Breast epithelium (tissue), 4 donors: ENCODE measurements at regions of chr3 and their contacts with region 1.

Region 1: GRCh38 chr3:98593046-98593936 is at the start of gene CPOX:
- DNase-seq: peak; percentile 58 to 67
- H3K4me3 ChIP-seq: peak within 1 kb of the TSS; percentile 59 to 84 (median 80)
- H3K27ac ChIP-seq: peak within 1 kb of the TSS; percentile 76 to 80
- H3K4me1 ChIP-seq: peaks cover 0 to 3% of the 10 kb centered on the region in 2 donors
- H3K27me3 ChIP-seq: no peaks in the 10 kb centered on the region
- CTCF ChIP-seq: no peak
- POLR2A ChIP-seq: no peak
- total RNA-seq, gene CPOX: 14.4 to 22.1 (median 15.1) TPM

Region 2: DNA sequence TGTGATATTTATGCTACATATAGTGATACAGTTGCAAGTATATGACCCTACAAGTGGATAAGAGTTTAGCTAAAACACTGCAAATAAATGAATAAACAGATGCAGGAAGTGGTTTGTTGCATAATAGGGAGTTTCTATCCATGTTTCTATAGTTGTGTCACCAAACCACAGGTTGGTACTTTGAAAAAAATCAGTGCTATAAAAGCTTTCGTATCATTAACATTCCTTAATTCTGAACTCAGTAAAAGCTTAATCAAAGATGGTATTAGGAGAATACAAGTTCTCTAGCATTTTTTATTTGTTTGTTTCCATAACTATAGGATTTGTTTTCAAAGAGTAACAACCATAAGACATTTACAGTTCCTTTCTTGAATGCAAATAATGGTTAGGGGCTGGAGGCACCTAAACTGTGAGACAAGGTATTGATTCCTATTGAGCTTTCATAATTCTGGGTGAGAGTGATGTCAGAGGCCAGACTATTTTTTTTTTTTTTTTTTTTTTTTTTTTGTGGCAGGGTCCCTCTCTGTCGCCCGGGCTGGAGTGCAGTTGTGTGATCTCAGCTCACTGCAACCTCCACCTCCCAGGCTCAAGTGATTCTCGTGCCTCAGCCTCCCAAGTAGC is 29.5 kb before region 1 on chr3:
- intact Hi-C with region 1: no loop called
- DNase-seq: no peak
- H3K4me3 ChIP-seq: no peak overlapping the region
- H3K27ac ChIP-seq: no peak overlapping the region
- H3K4me1 ChIP-seq: no peaks in the 10 kb centered on the region
- H3K27me3 ChIP-seq: no peaks in the 10 kb centered on the region
- CTCF ChIP-seq: no peak
- POLR2A ChIP-seq: no peak

Region 3: DNA sequence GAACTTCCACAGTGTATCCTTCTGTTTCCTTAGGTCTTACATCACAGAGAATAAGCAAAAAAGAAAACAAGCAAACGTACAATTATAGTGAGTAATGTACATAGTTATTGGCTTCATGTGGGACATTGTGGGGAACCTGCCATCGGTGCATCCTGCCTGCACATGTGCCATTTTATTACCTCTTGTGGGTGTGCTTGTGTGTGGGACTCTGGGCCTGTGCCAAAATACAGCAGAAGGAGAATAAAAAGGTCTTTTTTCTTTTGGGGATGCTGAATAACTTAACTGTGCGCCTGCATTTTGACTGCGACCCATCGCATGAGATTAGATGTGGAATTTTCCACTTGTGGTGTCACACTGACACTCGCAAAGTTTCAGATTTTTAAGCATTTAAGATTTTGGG is 477.8 kb after region 1 on chr3:
- intact Hi-C with region 1: loop called (anchors 5 kb)
- DNase-seq: no peak
- H3K4me3 ChIP-seq: no peak overlapping the region
- H3K27ac ChIP-seq: no peak overlapping the region
- H3K4me1 ChIP-seq: no peaks in the 10 kb centered on the region
- H3K27me3 ChIP-seq: no peaks in the 10 kb centered on the region
- CTCF ChIP-seq: no peak
- POLR2A ChIP-seq: no peak

Region 4: DNA sequence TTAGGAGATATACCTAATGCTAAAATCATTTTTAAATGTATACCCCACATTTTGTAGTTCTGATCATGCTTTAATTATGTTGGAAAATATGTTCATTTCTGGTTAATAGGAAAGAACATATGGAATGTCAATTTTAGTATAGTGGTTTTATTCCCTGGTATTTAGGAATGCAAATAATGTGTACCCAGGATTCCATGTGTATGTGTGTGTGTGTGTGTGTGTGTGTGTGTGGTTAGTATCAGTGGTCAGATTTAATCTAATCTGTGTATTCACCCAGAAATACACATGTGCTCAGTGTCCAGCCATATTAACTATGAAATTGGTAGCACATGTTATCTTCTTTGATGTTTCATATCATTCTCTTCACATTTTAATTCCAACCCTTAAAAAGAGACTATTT is 541.7 kb after region 1 on chr3:
- intact Hi-C with region 1: loop called (anchors 5 kb)
- DNase-seq: no peak
- H3K4me3 ChIP-seq: no peak overlapping the region
- H3K27ac ChIP-seq: no peak overlapping the region
- H3K4me1 ChIP-seq: no peaks in the 10 kb centered on the region
- H3K27me3 ChIP-seq: no peaks in the 10 kb centered on the region
- CTCF ChIP-seq: no peak
- POLR2A ChIP-seq: no peak